ENCODE measurements at regions of chr4 and their contacts with region 1.

Region 1: GRCh38 chr4:153466081-153466948 is at the start of gene TMEM131L:
- DNase-seq: peak; percentile 82
- ATAC-seq: peak; percentile 63
- H3K4me3 Mint-ChIP-seq: peak within 1 kb of the TSS; percentile 94
- H3K27ac Mint-ChIP-seq: peak within 1 kb of the TSS; percentile 86
- H3K4me1 Mint-ChIP-seq: peaks cover 31% of the 10 kb centered on the region
- H3K27me3 Mint-ChIP-seq: no peaks in the 10 kb centered on the region
- total RNA-seq, gene TMEM131L: 45.8 to 45.9 TPM

Region 2: GRCh38 chr4:153153339-153153871 is 312.9 kb before region 1 on chr4:
- CTCF ChIA-PET with region 1: no interaction called
- POLR2A ChIA-PET with region 1: no interaction called
- intact Hi-C with region 1: loop called in 1 of 2 experiments (anchors 2 kb)
- DNase-seq: peak; percentile 89
- ATAC-seq: peak; percentile 89
- H3K4me3 Mint-ChIP-seq: peak overlapping the region; percentile 74
- H3K27ac Mint-ChIP-seq: peak overlapping the region; percentile 80
- H3K4me1 Mint-ChIP-seq: peaks cover 50% of the 10 kb centered on the region
- H3K27me3 Mint-ChIP-seq: peaks cover 10% of the 10 kb centered on the region

Region 3: GRCh38 chr4:153432968-153433753 is 33.2 kb before region 1 on chr4:
- CTCF ChIA-PET with region 1: interaction called, 5 read pairs
- POLR2A ChIA-PET with region 1: interaction called, 3 read pairs
- intact Hi-C with region 1: loop called (anchors 1 kb)
- DNase-seq: peak; percentile 86
- ATAC-seq: peak; percentile 87
- H3K4me3 Mint-ChIP-seq: peak overlapping the region; percentile 68
- H3K27ac Mint-ChIP-seq: peak overlapping the region; percentile 93
- H3K4me1 Mint-ChIP-seq: peaks cover 62% of the 10 kb centered on the region
- H3K27me3 Mint-ChIP-seq: no peaks in the 10 kb centered on the region

Region 4: DNA sequence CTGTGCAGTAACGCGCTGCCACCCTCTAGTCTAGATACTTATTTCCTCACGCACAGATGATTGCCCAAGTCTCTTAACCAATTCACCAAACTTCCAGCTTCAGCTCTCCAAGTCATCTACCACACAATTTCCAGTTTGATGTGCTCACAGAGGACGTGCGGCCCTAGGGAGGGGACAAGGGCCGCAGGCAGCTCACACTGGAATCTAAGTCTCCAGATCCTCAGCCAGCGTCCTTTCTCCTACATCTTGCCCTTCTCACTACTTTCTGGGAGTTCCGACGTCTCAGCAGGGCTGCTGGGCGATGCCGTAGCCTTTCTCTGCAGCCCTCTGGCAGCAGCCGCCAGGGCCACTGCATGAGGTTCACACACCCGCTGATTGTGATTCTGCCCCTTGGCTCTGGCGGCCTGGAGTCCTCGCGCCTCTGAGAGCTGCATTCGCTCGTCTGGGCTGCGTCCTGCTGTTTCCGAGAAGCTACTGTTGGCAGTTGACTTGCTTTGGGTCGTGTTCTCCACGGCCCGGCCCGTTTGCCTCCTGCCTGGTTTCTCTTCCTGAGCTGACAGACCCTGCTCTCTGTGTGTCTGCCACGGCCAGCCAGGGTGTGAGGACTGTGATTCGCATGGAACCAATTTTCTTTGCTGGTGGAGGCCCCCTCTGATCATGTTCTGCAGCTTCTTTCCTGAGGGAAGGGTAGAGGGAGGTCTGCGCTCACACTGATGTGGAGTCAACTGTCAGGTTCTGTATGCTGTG is 14.2 kb before region 1 on chr4:
- CTCF ChIA-PET with region 1: no interaction called
- POLR2A ChIA-PET with region 1: interaction called, 3 read pairs
- intact Hi-C with region 1: loop called in 1 of 2 experiments (anchors 2 kb)
- DNase-seq: no peak
- ATAC-seq: no peak
- H3K4me3 Mint-ChIP-seq: no peak overlapping the region
- H3K27ac Mint-ChIP-seq: peak overlapping the region; percentile 7
- H3K4me1 Mint-ChIP-seq: peaks cover 15% of the 10 kb centered on the region
- H3K27me3 Mint-ChIP-seq: no peaks in the 10 kb centered on the region

Region 5: GRCh38 chr4:153497988-153498967 is 32.0 kb after region 1 on chr4:
- CTCF ChIA-PET with region 1: interaction called, 5 read pairs
- POLR2A ChIA-PET with region 1: interaction called, 12 read pairs
- intact Hi-C with region 1: loop called in 1 of 2 experiments (anchors 1 kb)
- DNase-seq: no peak
- ATAC-seq: peak; percentile 14
- H3K4me3 Mint-ChIP-seq: peak overlapping the region; percentile 75
- H3K27ac Mint-ChIP-seq: peak overlapping the region; percentile 99
- H3K4me1 Mint-ChIP-seq: peaks cover 95% of the 10 kb centered on the region
- H3K27me3 Mint-ChIP-seq: no peaks in the 10 kb centered on the region

Region 6: GRCh38 chr4:153528705-153529485 is 62.6 kb after region 1 on chr4:
- CTCF ChIA-PET with region 1: interaction called, 13 read pairs
- POLR2A ChIA-PET with region 1: interaction called, 5 read pairs
- intact Hi-C with region 1: loop called in 1 of 2 experiments (anchors 1 kb)
- DNase-seq: no peak
- ATAC-seq: peak; percentile 69
- H3K4me3 Mint-ChIP-seq: peak overlapping the region; percentile 57
- H3K27ac Mint-ChIP-seq: peak overlapping the region; percentile 100
- H3K4me1 Mint-ChIP-seq: peaks cover 94% of the 10 kb centered on the region
- H3K27me3 Mint-ChIP-seq: no peaks in the 10 kb centered on the region

Region 7: DNA sequence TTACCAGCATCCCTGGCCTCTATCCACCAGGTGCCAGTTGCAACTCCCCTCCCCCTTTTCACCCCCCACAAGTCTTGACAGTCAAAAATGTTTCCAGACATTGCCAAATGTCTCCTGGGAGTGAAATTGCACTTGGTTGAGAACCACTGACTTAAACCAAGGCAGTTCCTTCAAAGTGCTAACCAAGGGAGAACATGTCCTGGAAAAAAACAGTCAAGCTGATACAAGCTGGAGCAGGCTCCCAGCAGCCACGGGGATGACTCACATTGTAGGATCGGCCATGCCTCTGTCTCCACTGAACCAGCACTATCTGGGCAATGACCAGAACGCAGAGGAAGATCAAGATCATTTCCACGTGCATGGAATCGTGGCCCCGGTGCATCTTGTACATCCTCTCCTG is 282.1 kb after region 1 on chr4:
- CTCF ChIA-PET with region 1: no interaction called
- POLR2A ChIA-PET with region 1: no interaction called
- intact Hi-C with region 1: no loop called
- DNase-seq: no peak
- ATAC-seq: no peak
- H3K4me3 Mint-ChIP-seq: no peak overlapping the region
- H3K27ac Mint-ChIP-seq: no peak overlapping the region
- H3K4me1 Mint-ChIP-seq: peaks cover 3% of the 10 kb centered on the region
- H3K27me3 Mint-ChIP-seq: no peaks in the 10 kb centered on the region

Region 8: GRCh38 chr4:154478128-154478527 is 1011.8 kb after region 1 on chr4:
- CTCF ChIA-PET with region 1: no interaction called
- POLR2A ChIA-PET with region 1: no interaction called
- intact Hi-C with region 1: no loop called
- DNase-seq: no peak
- ATAC-seq: no peak
- H3K4me3 Mint-ChIP-seq: no peak overlapping the region
- H3K27ac Mint-ChIP-seq: no peak overlapping the region
- H3K4me1 Mint-ChIP-seq: no peaks in the 10 kb centered on the region
- H3K27me3 Mint-ChIP-seq: peaks cover 6% of the 10 kb centered on the region